Activated CD8-positive, alpha-beta T cell treated with anti-CD3 and anti-CD28 coated beads for 36 hours (primary cell): ENCODE measurements at regions of chr16 and their contacts with region 1.

Region 1: GRCh38 chr16:55323637-55324490 is at the start of gene IRX6:
- DNase-seq: no peak
- ATAC-seq: no peak
- H3K4me3 Mint-ChIP-seq: no peak within 1 kb of the TSS
- H3K27ac Mint-ChIP-seq: no peak within 1 kb of the TSS
- H3K4me1 Mint-ChIP-seq: no peaks in the 10 kb centered on the region
- H3K27me3 Mint-ChIP-seq: peaks cover 35% of the 10 kb centered on the region
- CTCF ChIP-seq: peak; percentile 30
- total RNA-seq, gene IRX6: not detected

Region 2: GRCh38 chr16:55250701-55251100 is 73.2 kb before region 1 on chr16:
- CTCF ChIA-PET with region 1: no interaction called
- POLR2A ChIA-PET with region 1: no interaction called
- intact Hi-C with region 1: no loop called
- DNase-seq: no peak
- ATAC-seq: no peak
- H3K4me3 Mint-ChIP-seq: no peak overlapping the region
- H3K27ac Mint-ChIP-seq: no peak overlapping the region
- H3K4me1 Mint-ChIP-seq: no peaks in the 10 kb centered on the region
- H3K27me3 Mint-ChIP-seq: peaks cover 2% of the 10 kb centered on the region
- CTCF ChIP-seq: no peak

Region 3: DNA sequence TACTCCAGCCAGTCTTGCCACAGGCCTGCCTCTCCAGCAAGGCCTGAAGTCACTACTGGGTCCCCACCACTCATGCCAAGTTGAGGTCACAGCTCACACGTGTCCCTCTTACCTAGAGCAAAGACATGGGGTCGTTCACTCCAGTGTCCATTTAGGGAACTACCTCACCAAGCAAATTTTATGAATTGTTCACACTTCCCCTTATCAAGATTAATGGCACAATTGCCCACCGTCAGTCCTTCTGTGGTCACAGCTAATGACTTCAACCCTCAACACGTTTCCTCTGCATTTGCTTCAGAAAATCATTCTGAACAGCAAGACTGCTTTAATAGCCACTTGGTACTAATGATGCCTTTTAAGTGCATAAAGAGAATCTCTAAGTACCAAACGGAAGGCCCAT is 14.8 kb after region 1 on chr16:
- CTCF ChIA-PET with region 1: no interaction called
- POLR2A ChIA-PET with region 1: no interaction called
- intact Hi-C with region 1: no loop called
- DNase-seq: no peak
- ATAC-seq: no peak
- H3K4me3 Mint-ChIP-seq: no peak overlapping the region
- H3K27ac Mint-ChIP-seq: no peak overlapping the region
- H3K4me1 Mint-ChIP-seq: no peaks in the 10 kb centered on the region
- H3K27me3 Mint-ChIP-seq: peaks cover 19% of the 10 kb centered on the region
- CTCF ChIP-seq: no peak

Region 4: DNA sequence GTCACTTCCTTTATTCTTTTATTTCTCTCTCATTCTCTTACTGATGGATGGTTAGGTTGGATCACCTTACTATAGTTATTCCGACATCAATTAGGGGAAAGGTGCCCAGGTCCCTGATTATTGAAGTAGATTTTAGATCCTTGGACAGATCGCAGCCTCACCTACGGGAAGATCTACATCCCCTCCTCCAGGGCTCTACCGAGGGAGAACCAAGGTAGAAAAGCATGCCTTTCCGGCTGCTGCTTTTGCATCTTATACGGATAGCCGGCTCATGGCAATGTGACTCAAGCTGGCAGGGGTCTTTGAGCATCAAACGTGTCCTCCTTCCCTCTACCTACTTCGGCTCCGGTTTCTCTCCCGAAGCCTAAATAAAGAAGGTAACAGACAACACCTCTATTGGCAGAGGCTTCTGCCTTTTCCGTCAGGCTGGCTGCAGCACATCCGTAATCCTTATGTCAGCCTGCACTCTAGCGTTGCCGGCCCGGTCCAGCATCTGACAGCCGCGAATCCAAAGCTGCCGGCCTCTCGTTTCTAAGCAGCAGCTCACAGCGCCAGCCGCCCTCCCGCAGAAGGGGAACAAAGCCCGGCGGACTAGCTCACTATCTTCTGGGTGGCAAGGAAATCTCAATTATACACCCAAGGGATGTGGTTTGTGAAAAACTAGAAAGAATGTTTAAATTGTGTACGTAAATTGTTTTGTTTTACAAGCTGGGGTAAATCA is 47.1 kb after region 1 on chr16:
- CTCF ChIA-PET with region 1: no interaction called
- POLR2A ChIA-PET with region 1: no interaction called
- intact Hi-C with region 1: loop called (anchors 10 kb)
- DNase-seq: peak; percentile 24
- ATAC-seq: no peak
- H3K4me3 Mint-ChIP-seq: no peak overlapping the region
- H3K27ac Mint-ChIP-seq: no peak overlapping the region
- H3K4me1 Mint-ChIP-seq: no peaks in the 10 kb centered on the region
- H3K27me3 Mint-ChIP-seq: peaks cover 29% of the 10 kb centered on the region
- CTCF ChIP-seq: no peak